ENCODE measurements at regions of chr15 and their contacts with region 1.

Region 1: GRCh38 chr15:41695750-41696426 is 35.7 kb downstream of the MGA start:
- DNase-seq: peak; percentile 80
- ATAC-seq: peak; percentile 99
- H3K4me3 ChIP-seq: peak overlapping the region in 2 of 5 experiments; percentile 19 to 21
- H3K4me3 Mint-ChIP-seq: peak overlapping the region; percentile 35
- H3K27ac ChIP-seq: peak overlapping the region; percentile 52 to 77
- H3K27ac Mint-ChIP-seq: peak overlapping the region; percentile 51
- H3K4me1 ChIP-seq: peaks cover 12 to 28% of the 10 kb centered on the region in 2 donors
- H3K4me1 Mint-ChIP-seq: peaks cover 45% of the 10 kb centered on the region
- H3K27me3 ChIP-seq: no peaks in the 10 kb centered on the region
- H3K27me3 Mint-ChIP-seq: no peaks in the 10 kb centered on the region
- CTCF ChIP-seq: peak; percentile 66

Region 2: DNA sequence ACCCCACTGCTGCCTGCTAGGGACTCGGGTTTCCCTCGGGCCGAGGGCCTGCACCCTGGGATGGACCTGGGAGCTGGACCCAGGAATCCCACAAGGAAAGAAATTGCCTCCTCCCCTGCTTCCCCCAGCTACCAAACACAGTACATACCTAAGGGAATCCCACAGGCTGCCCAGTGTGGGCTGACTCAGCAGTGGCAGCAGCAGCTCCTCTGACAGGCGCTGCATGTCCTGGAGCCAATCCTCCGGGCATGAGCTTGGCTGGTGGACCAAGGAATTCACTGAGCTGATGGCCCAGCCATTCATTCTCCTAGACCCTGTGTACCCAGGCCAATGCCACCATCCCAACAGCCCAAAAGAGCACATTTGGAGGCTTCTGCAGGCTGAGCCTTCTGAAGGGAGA is 172.8 kb before region 1 on chr15:
- CTCF ChIA-PET with region 1: no interaction called
- POLR2A ChIA-PET with region 1: no interaction called
- intact Hi-C with region 1: no loop called
- DNase-seq: no peak
- ATAC-seq: no peak
- H3K4me3 ChIP-seq: no peak overlapping the region
- H3K4me3 Mint-ChIP-seq: no peak overlapping the region
- H3K27ac ChIP-seq: no peak overlapping the region
- H3K27ac Mint-ChIP-seq: no peak overlapping the region
- H3K4me1 ChIP-seq: no peaks in the 10 kb centered on the region
- H3K4me1 Mint-ChIP-seq: no peaks in the 10 kb centered on the region
- H3K27me3 ChIP-seq: no peaks in the 10 kb centered on the region
- H3K27me3 Mint-ChIP-seq: no peaks in the 10 kb centered on the region
- CTCF ChIP-seq: no peak

Region 3: DNA sequence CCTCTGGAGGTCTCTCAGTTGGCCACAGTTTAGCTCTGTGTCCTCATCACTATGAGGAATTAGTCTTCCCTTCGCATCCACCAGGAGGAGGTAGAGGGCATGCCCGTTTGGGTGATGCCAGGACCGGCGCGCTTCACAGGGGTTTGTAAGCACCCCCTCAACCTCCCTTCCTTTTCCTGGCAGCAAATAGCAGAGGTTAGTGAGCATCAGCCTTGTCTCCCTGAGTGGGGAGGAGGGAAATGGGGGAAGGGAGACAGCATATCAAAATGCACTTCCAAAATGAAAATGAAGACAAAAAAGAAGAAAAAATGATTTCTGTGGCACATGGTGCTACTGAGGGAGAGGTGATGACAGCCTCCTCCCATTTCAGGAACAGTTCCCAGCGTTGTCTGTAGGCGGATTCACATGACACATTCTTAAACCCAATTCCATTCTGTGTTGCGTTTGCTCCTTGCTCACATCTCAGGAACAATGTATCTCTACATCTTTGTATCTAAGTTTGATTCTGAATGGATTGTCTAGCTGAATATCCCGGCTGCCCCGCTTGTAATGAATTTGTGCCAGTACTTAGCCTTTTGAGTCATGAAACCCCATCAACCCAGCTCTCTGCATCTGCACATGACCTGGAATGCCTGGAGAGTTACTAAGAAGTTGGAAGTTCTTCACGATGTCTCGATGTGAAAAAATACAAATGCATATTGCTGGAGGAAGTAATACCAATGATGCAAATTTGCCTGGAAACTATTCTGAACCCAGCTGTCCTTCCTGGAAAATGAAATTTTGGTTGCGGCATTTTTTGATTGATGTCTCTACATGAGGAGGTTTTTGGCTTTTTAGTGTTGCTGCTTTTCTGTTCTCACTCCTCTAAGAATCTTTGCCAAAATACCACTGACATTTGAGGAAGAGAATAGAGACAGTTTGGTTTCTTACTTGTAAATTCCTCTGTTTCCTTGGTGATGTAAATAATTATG is 91.7 kb before region 1 on chr15:
- CTCF ChIA-PET with region 1: interaction called, 15 read pairs
- POLR2A ChIA-PET with region 1: no interaction called
- intact Hi-C with region 1: loop called (anchors 1 kb)
- DNase-seq: peak; percentile 74
- ATAC-seq: peak; percentile 85
- H3K4me3 ChIP-seq: peak overlapping the region in 3 of 5 experiments; percentile 2 to 31 (median 29)
- H3K4me3 Mint-ChIP-seq: peak overlapping the region; percentile 77
- H3K27ac ChIP-seq: no peak overlapping the region
- H3K27ac Mint-ChIP-seq: no peak overlapping the region
- H3K4me1 ChIP-seq: peaks cover 8 to 10% of the 10 kb centered on the region in 2 donors
- H3K4me1 Mint-ChIP-seq: peaks cover 9% of the 10 kb centered on the region
- H3K27me3 ChIP-seq: peaks cover 0 to 17% (median 5%) of the 10 kb centered on the region in 4 experiments
- H3K27me3 Mint-ChIP-seq: peaks cover 34% of the 10 kb centered on the region
- CTCF ChIP-seq: peak; percentile 80

Region 4: DNA sequence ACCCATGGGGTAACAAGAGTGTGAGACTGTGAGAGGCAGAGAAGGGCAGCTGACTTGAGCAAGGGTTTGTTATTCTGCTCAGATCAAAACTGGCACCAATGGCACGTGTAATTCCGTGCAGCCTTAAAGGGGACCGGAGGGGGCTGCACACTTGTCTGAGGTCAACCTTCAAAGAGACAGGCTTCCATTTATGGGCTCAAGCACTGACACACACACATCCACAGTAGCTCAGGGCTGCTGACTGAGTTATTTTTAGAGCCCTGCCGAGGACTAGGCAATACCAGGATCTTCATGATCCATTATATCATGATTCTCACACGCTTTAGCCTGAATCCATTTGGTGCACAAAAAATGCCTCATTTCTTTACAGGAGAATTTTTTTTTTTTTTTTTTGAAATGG is 218.5 kb after region 1 on chr15:
- CTCF ChIA-PET with region 1: no interaction called
- POLR2A ChIA-PET with region 1: no interaction called
- intact Hi-C with region 1: no loop called
- DNase-seq: no peak
- ATAC-seq: no peak
- H3K4me3 ChIP-seq: no peak overlapping the region
- H3K4me3 Mint-ChIP-seq: no peak overlapping the region
- H3K27ac ChIP-seq: no peak overlapping the region
- H3K27ac Mint-ChIP-seq: no peak overlapping the region
- H3K4me1 ChIP-seq: peaks cover 0 to 10% of the 10 kb centered on the region in 2 donors
- H3K4me1 Mint-ChIP-seq: peaks cover 9% of the 10 kb centered on the region
- H3K27me3 ChIP-seq: no peaks in the 10 kb centered on the region
- H3K27me3 Mint-ChIP-seq: no peaks in the 10 kb centered on the region
- CTCF ChIP-seq: no peak

Measured in B cell (primary cell).